Activated naive CD4-positive, alpha-beta T cell treated with anti-CD3 and anti-CD28 coated beads for 36 hours (primary cell): ENCODE measurements at regions of chr12 and their contacts with region 1.

Region 1: GRCh38 chr12:54853995-54854566 is at the start of gene MUCL1:
- DNase-seq: peak; percentile 89
- H3K4me3 Mint-ChIP-seq: no peak within 1 kb of the TSS
- H3K27ac Mint-ChIP-seq: no peak within 1 kb of the TSS
- H3K4me1 Mint-ChIP-seq: peaks cover 16% of the 10 kb centered on the region
- H3K27me3 Mint-ChIP-seq: no peaks in the 10 kb centered on the region
- total RNA-seq, gene MUCL1: not detected

Region 2: DNA sequence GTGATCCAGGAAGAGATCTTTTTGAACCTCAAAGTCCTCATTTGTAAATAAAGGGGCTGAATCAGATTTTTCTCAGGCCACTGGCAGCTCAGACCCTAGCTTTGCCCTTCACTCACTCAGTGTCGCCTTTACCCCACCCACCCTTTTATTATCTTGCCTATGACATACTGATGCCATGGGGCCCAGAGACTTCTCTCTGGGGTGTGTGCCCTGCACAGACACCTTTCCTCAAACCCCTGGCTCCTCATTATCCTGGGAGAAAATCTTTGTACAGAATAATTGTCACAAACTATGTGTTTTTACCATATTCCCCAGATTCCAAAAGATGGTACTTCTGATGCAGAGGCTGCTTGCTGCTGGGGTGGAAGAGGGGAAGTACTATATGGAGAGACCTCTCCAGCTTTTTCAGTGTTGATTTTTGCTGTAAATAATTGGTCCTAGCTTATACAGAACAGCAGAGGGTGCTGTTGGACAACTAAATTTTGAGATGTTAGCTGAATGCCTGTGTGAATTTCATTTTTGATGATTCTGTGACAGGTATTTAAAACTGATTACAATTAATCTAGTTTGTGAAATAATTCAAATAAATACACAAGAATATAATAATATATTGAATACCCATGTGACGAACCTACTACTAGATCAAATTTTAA is 152.0 kb before region 1 on chr12:
- CTCF ChIA-PET with region 1: interaction called, 8 read pairs
- intact Hi-C with region 1: loop called (anchors 1 kb)
- DNase-seq: no peak
- H3K4me3 Mint-ChIP-seq: no peak overlapping the region
- H3K27ac Mint-ChIP-seq: no peak overlapping the region
- H3K4me1 Mint-ChIP-seq: no peaks in the 10 kb centered on the region
- H3K27me3 Mint-ChIP-seq: no peaks in the 10 kb centered on the region

Region 3: DNA sequence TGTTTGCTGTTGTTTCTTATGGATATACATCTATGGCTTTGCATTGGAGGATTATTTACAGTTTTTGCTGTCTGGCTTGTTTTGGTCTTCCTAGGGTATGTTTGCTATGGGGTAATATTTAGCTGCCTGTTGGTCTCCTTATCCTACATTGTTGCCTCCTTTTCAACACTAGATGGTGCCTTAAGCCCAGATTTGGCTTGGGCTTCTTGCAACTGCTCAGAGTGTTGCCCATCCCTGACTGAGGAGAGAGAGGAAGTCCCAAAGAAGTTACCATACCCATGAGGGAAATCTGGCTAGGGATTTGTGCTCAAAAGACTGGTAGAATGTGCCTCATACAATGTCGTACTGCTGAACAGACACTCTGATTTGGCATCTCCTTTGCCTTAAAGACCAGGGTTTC is 94.3 kb before region 1 on chr12:
- CTCF ChIA-PET with region 1: interaction called, 11 read pairs
- intact Hi-C with region 1: no loop called
- DNase-seq: peak; percentile 38
- H3K4me3 Mint-ChIP-seq: no peak overlapping the region
- H3K27ac Mint-ChIP-seq: no peak overlapping the region
- H3K4me1 Mint-ChIP-seq: peaks cover 19% of the 10 kb centered on the region
- H3K27me3 Mint-ChIP-seq: no peaks in the 10 kb centered on the region

Region 4: DNA sequence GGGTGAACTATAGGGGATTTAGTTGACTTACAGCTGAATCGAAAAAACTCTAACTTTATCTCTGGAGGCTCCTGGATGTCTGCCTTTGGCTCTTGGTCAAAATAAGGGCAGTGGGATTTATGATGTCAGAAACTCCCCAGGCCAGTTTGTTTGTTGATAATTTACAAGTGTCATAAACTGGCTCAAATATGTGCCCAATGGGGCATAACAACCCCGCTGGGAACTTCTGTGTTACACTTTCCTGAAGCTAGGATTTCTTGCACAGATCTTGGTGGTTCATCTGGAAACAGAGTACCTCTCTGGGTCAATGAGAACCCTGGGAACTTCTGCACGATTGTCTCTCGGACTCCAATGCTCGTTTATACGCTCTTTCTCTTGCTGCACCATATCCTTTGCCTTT is 58.4 kb before region 1 on chr12:
- CTCF ChIA-PET with region 1: no interaction called
- intact Hi-C with region 1: no loop called
- DNase-seq: no peak
- H3K4me3 Mint-ChIP-seq: no peak overlapping the region
- H3K27ac Mint-ChIP-seq: no peak overlapping the region
- H3K4me1 Mint-ChIP-seq: no peaks in the 10 kb centered on the region
- H3K27me3 Mint-ChIP-seq: no peaks in the 10 kb centered on the region

Region 5: DNA sequence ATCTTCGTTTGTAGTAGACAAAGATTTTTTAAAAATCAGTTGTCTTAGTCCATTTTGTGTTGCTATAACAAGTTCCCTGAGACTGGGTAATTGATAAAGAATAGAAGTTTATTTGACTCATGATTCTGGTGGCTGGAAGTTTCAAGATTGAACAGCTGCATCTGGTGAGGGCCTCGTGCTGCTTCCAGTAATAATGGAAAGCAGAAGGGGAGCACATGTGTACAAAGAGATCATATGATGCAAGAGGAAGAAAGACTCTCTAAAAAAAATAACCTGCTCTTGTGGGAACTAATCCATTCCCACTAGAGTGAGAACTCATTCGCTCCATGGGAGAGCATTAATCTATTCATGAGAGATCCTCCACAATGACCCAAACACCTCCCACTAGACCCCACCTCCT is 25.1 kb after region 1 on chr12:
- CTCF ChIA-PET with region 1: no interaction called
- intact Hi-C with region 1: loop called (anchors 1 kb)
- DNase-seq: peak; percentile 50
- H3K4me3 Mint-ChIP-seq: no peak overlapping the region
- H3K27ac Mint-ChIP-seq: peak overlapping the region; percentile 22
- H3K4me1 Mint-ChIP-seq: peaks cover 16% of the 10 kb centered on the region
- H3K27me3 Mint-ChIP-seq: peaks cover 8% of the 10 kb centered on the region

Region 6: GRCh38 chr12:54935235-54935951 is 81.3 kb after region 1 on chr12:
- CTCF ChIA-PET with region 1: interaction called, 5 read pairs
- intact Hi-C with region 1: loop called (anchors 1 kb)
- DNase-seq: peak; percentile 69
- H3K4me3 Mint-ChIP-seq: peak overlapping the region; percentile 51
- H3K27ac Mint-ChIP-seq: peak overlapping the region; percentile 93
- H3K4me1 Mint-ChIP-seq: peaks cover 64% of the 10 kb centered on the region
- H3K27me3 Mint-ChIP-seq: no peaks in the 10 kb centered on the region

Region 7: GRCh38 chr12:55132816-55133215 is 278.7 kb after region 1 on chr12:
- CTCF ChIA-PET with region 1: no interaction called
- intact Hi-C with region 1: no loop called
- DNase-seq: no peak
- H3K4me3 Mint-ChIP-seq: no peak overlapping the region
- H3K27ac Mint-ChIP-seq: no peak overlapping the region
- H3K4me1 Mint-ChIP-seq: no peaks in the 10 kb centered on the region
- H3K27me3 Mint-ChIP-seq: peaks cover 31% of the 10 kb centered on the region

Region 8: DNA sequence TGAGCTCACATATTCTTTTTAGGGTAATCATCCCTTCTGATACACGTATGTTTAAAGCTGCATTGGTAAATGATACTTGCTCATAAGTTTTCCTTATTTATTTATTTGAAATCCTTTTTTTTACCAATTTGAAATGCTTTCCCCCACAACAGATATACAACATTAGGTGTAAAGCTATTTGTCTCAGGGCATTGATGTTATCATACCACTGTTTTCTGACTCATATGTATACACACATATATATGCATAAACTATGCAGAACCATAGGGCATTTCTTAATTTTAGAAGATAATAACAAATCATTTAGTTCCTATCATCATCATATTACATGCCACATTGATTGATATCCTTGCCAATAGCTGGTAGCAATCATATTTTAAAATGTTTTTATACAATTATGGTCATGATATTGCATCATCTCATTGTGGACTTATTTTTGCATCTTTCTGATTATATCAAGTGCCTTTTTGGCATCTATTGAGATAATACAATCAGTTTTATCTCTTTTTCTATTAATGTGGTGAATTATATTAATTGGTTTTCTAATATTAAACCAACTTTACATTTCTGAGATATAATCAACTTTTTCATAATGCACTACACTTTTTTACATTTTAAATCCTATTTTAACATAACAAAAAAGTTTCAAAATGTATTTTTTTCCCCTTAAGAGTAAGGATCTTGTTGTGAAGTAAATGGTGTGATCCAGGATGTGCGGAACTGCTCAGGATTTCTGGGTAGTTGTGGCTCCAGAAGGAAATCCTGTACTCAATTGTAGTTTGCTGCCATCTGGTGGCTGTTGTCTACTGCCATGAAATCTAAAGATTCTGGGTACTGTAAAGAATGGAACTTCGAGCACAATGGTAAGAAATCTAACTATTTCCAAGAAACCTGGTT is 288.8 kb after region 1 on chr12:
- CTCF ChIA-PET with region 1: no interaction called
- intact Hi-C with region 1: loop called (anchors 1 kb)
- DNase-seq: peak; percentile 70
- H3K4me3 Mint-ChIP-seq: no peak overlapping the region
- H3K27ac Mint-ChIP-seq: no peak overlapping the region
- H3K4me1 Mint-ChIP-seq: no peaks in the 10 kb centered on the region
- H3K27me3 Mint-ChIP-seq: no peaks in the 10 kb centered on the region